ENCODE measurements at regions of chr3 and their contacts with region 1.

Region 1: DNA sequence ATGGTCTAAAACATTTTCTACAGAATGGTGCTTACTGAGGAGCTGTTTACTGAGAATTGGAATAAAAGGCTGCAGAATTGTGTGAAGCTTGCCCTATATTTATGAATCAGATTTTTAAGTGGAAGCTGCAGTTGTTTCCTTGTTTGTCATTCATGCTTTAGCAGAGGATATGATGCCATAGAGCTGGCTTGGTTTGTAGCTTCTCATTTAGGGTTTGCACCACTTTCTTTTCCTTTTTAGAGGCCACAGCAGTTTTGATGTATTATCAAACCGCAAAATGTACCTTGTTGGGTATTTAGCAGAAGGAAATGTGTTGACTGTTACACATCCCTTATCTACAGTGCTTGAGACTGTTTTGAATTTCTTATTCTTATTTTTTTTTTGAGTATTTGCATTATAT is 66.2 kb downstream of the RASA2 start:
- DNase-seq: peak in 21 of 35 experiments; percentile 4 to 71 (median 27)
- ATAC-seq: peak; percentile 85 to 92 (median 92)
- H3K4me3 ChIP-seq: peak overlapping the region in 1 of 2 donors; percentile 15
- H3K4me3 Mint-ChIP-seq: peak overlapping the region; percentile 2 to 42 (median 22)
- H3K27ac ChIP-seq: peak overlapping the region; percentile 48
- H3K27ac Mint-ChIP-seq: peak overlapping the region; percentile 61 to 76
- H3K4me1 ChIP-seq: peaks cover 10 to 72% of the 10 kb centered on the region in 2 experiments
- H3K4me1 Mint-ChIP-seq: peaks cover 50 to 66% (median 65%) of the 10 kb centered on the region in 3 donors
- H3K27me3 ChIP-seq: no peaks in the 10 kb centered on the region
- H3K27me3 Mint-ChIP-seq: no peaks in the 10 kb centered on the region

Region 2: DNA sequence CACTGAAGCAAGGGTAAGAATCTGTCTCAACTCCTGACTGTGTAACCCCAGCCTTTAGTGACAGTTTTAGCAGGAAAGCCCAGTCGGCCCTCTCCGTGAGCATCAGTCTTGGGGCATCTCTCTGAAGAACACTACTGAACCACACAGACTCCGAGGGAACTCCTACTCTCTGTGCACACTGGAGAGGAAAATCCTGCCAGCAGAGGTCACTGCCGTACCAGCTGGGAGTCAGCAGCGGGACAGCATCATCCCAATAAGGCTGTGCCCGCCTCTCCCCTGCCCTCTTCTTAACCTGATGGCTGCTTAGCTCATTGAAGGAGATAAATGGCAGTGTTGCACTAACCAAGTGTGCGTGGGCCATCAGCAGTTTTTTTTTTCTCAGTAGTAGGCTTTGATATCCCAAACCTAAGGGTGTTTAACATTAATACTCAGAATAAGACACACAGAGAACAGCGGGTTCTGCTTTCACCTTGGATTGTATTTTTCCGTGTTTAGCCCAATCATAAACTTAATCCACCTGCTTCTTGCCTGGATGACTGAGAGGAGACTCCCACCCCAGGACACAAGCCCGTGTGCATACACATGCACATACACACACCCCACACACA is 92.9 kb before region 1 on chr3:
- CTCF ChIA-PET with region 1: interaction called, 71 to 104 read pairs
- POLR2A ChIA-PET with region 1: no interaction called
- DNase-seq: peak; percentile 71 to 92 (median 85)
- ATAC-seq: peak; percentile 98 to 100 (median 100)
- H3K4me3 ChIP-seq: no peak overlapping the region
- H3K4me3 Mint-ChIP-seq: no peak overlapping the region
- H3K27ac ChIP-seq: no peak overlapping the region
- H3K27ac Mint-ChIP-seq: no peak overlapping the region
- H3K4me1 ChIP-seq: peaks cover 0 to 7% of the 10 kb centered on the region in 2 experiments
- H3K4me1 Mint-ChIP-seq: peaks cover 4 to 11% (median 7%) of the 10 kb centered on the region in 3 donors
- H3K27me3 ChIP-seq: peaks cover 0 to 6% of the 10 kb centered on the region in 2 experiments
- H3K27me3 Mint-ChIP-seq: no peaks in the 10 kb centered on the region

Region 3: DNA sequence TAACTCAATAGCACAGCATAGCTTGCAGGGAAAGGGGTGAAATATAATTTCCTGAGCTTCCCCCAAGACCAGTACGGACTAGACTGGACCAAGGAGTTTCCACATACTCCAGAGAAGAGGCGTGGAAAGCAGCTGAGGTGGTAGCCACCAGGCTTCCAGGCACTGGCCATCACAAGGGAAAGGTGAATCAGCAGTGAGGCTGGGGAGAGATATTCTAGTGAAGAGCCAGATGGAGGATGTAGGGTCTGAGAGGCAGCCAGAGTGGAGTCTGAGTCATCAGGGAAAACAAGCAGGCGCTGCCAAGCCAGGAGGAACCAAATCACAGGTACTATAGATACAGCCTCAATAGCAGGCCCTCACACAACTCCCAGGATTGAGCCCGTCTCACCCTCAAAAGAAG is 75.8 kb before region 1 on chr3:
- CTCF ChIA-PET with region 1: interaction called in 1 of 2 experiments, 21 read pairs
- POLR2A ChIA-PET with region 1: interaction called, 6 to 7 read pairs
- DNase-seq: no peak
- ATAC-seq: peak in 1 of 4 experiments; percentile 26
- H3K4me3 ChIP-seq: no peak overlapping the region
- H3K4me3 Mint-ChIP-seq: no peak overlapping the region
- H3K27ac ChIP-seq: no peak overlapping the region
- H3K27ac Mint-ChIP-seq: no peak overlapping the region
- H3K4me1 ChIP-seq: peaks cover 7 to 21% of the 10 kb centered on the region in 2 experiments
- H3K4me1 Mint-ChIP-seq: peaks cover 36 to 43% (median 38%) of the 10 kb centered on the region in 3 donors
- H3K27me3 ChIP-seq: no peaks in the 10 kb centered on the region
- H3K27me3 Mint-ChIP-seq: no peaks in the 10 kb centered on the region

Region 4: DNA sequence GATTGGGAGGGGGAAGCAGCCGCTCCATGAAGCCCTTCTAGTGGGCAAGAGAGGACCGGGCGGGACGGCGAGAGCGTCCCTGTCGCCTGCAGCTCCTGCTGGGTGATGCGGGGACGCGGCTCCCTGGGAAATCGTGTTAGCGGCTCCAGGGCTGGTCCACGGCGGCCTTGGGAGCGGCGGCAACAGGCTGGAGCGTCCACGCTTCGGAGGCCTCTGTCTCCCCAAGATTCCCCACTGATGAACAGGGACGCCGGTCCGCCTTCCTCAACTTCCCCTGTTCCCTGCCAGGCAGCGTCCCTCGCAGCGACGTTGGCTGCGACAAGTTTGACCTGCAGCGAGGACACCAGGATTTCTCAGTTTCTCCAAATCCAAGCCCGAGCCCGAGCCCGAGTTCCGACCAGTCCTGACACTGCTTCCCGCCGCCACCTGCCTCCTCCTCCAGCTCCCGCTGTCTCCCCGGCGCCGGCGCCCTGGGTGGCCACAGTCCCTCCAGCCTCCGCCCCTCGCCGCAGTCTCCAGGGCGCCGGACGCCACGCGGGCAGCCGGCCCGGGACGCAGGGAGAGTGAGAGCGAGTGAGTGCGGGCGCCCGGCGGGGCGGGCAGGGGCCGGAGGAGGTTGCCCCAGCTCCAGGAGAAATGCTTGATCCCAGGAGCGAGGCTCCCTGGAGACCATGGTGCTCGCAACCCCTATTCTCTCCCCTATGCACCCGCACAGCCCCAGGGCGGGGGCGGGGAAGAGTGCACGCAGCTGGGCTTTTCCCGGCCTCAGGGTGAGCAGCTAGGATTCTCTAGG is 107.0 kb after region 1 on chr3:
- CTCF ChIA-PET with region 1: no interaction called
- POLR2A ChIA-PET with region 1: no interaction called
- DNase-seq: no peak
- ATAC-seq: peak in 1 of 4 experiments; percentile 36
- H3K4me3 ChIP-seq: peak overlapping the region in 1 of 2 donors; percentile 35
- H3K4me3 Mint-ChIP-seq: peak overlapping the region; percentile 39 to 70 (median 59)
- H3K27ac ChIP-seq: no peak overlapping the region
- H3K27ac Mint-ChIP-seq: no peak overlapping the region
- H3K4me1 ChIP-seq: peaks cover 2 to 12% of the 10 kb centered on the region in 2 experiments
- H3K4me1 Mint-ChIP-seq: peaks cover 7 to 8% (median 7%) of the 10 kb centered on the region in 3 donors
- H3K27me3 ChIP-seq: peaks cover 10 to 52% of the 10 kb centered on the region in 2 experiments
- H3K27me3 Mint-ChIP-seq: peaks cover 50 to 64% of the 10 kb centered on the region in 2 donors

Region 5: GRCh38 chr3:141746962-141747361 is 193.9 kb after region 1 on chr3:
- CTCF ChIA-PET with region 1: no interaction called
- POLR2A ChIA-PET with region 1: no interaction called
- DNase-seq: no peak
- ATAC-seq: no peak
- H3K4me3 ChIP-seq: no peak overlapping the region
- H3K4me3 Mint-ChIP-seq: no peak overlapping the region
- H3K27ac ChIP-seq: no peak overlapping the region
- H3K27ac Mint-ChIP-seq: no peak overlapping the region
- H3K4me1 ChIP-seq: peaks cover 6 to 7% of the 10 kb centered on the region in 2 experiments
- H3K4me1 Mint-ChIP-seq: peaks cover 22 to 29% (median 28%) of the 10 kb centered on the region in 3 donors
- H3K27me3 ChIP-seq: no peaks in the 10 kb centered on the region
- H3K27me3 Mint-ChIP-seq: no peaks in the 10 kb centered on the region

Measured in T-cell (primary cell).